Left ventricle myocardium superior (tissue), 1 donor: ENCODE measurements at regions of chr7 and their contacts with region 1.

Region 1: GRCh38 chr7:129101746-129102145 is 42.8 kb upstream of the TSPAN33 start:
- DNase-seq: no peak
- ATAC-seq: no peak

Region 2: DNA sequence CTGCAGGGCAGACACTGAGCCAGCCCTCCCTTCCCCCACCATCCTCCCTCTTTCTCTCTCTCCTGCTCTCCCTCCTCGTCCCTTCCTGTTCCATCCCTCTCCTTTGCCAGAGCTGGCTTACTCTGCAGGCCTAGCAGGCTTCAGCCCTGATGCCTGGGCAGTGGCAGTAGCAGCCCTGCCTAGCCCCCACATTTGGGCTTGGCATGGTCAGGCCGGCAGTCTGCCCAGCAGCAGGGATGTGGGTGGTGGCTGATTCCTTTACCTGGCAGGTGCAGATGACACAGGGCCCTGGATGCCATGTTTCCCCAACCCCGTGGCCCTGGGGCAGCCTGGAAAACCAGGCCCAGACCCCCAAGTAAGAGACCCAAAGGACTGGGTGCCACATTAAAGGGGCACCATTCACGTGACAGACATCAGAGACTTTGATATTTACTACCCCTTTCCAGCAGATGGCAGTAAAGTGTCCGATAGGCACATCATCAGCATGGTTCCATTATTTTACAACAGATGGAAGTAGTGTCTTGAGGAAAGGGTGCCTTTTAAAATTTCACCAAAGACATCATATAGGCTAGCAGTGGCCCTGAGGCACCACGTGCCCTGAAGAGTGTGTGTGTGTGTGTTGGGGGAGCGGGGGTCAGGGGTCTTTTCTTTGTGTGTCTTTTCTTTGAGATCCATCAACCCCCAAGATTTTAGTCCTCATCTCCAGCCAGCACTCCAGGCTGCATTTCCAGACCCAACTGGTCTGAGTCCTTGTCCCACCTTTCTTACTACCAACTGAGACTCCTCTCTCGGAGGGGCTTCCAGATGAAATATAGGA is 197.2 kb before region 1 on chr7:
- intact Hi-C with region 1: loop called (anchors 10 kb)
- DNase-seq: no peak
- ATAC-seq: peak; percentile 52